HCT116 (cell line): ENCODE measurements at regions of chr15 and their contacts with region 1.

Region 1: GRCh38 chr15:85504749-85505676 is 124.6 kb downstream of the AKAP13 start:
- DNase-seq: peak; percentile 53
- ATAC-seq: peak; percentile 83
- H3K4me3 ChIP-seq: no peak overlapping the region
- H3K27ac ChIP-seq: no peak overlapping the region
- H3K4me1 ChIP-seq: no peaks in the 10 kb centered on the region
- H3K27me3 ChIP-seq: no peaks in the 10 kb centered on the region
- CTCF ChIP-seq: peak; percentile 55 to 78 (median 65); a peak in 5 of 6 replicates
- POLR2A ChIP-seq: no peak
- RAD21 ChIP-seq: peak; percentile 70

Region 2: GRCh38 chr15:85494048-85494793 is 10.8 kb before region 1 on chr15:
- CTCF ChIA-PET with region 1: interaction called, 12 read pairs
- POLR2A ChIA-PET with region 1: no interaction called
- RAD21 ChIA-PET with region 1: no interaction called
- intact Hi-C with region 1: no loop called
- DNase-seq: peak; percentile 93
- ATAC-seq: peak; percentile 100
- H3K4me3 ChIP-seq: peak overlapping the region in 1 of 2 experiments; percentile 40; a peak in 3 of 4 replicates
- H3K27ac ChIP-seq: peak overlapping the region; percentile 58
- H3K4me1 ChIP-seq: peaks cover 21 to 41% of the 10 kb centered on the region in 2 experiments
- H3K27me3 ChIP-seq: no peaks in the 10 kb centered on the region
- CTCF ChIP-seq: no peak
- POLR2A ChIP-seq: no peak
- RAD21 ChIP-seq: peak; percentile 24

Region 3: DNA sequence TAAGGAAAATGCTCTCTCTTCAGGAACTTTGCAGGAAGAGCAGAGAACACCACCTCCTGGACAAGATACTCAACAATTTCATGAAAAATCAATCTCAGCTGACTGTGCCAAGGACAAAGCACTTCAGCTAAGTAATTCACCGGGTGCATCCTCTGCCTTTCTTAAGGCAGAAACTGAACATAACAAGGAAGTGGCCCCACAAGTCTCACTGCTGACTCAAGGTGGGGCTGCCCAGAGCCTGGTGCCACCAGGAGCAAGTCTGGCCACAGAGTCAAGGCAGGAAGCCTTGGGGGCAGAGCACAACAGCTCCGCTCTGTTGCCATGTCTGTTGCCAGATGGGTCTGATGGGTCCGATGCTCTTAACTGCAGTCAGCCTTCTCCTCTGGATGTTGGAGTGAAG is 75.9 kb after region 1 on chr15:
- CTCF ChIA-PET with region 1: no interaction called
- POLR2A ChIA-PET with region 1: no interaction called
- RAD21 ChIA-PET with region 1: no interaction called
- intact Hi-C with region 1: no loop called
- DNase-seq: no peak
- ATAC-seq: no peak
- H3K4me3 ChIP-seq: no peak overlapping the region
- H3K27ac ChIP-seq: no peak overlapping the region
- H3K4me1 ChIP-seq: peaks cover 10 to 15% of the 10 kb centered on the region in 2 experiments
- H3K27me3 ChIP-seq: no peaks in the 10 kb centered on the region
- CTCF ChIP-seq: no peak
- POLR2A ChIP-seq: no peak
- RAD21 ChIP-seq: no peak

Region 4: GRCh38 chr15:85625856-85626255 is 120.8 kb after region 1 on chr15:
- CTCF ChIA-PET with region 1: no interaction called
- POLR2A ChIA-PET with region 1: no interaction called
- RAD21 ChIA-PET with region 1: no interaction called
- intact Hi-C with region 1: no loop called
- DNase-seq: no peak
- ATAC-seq: no peak
- H3K4me3 ChIP-seq: no peak overlapping the region
- H3K27ac ChIP-seq: no peak overlapping the region
- H3K4me1 ChIP-seq: no peaks in the 10 kb centered on the region; a peak in 1 of 4 replicates
- H3K27me3 ChIP-seq: no peaks in the 10 kb centered on the region
- CTCF ChIP-seq: no peak
- POLR2A ChIP-seq: no peak
- RAD21 ChIP-seq: no peak